ENCODE measurements at regions of chr7 and their contacts with region 1.

Region 1: GRCh38 chr7:27064159-27064558 is 31.6 kb downstream of the HOXA1 start:
- DNase-seq: no peak
- ATAC-seq: no peak

Region 2: DNA sequence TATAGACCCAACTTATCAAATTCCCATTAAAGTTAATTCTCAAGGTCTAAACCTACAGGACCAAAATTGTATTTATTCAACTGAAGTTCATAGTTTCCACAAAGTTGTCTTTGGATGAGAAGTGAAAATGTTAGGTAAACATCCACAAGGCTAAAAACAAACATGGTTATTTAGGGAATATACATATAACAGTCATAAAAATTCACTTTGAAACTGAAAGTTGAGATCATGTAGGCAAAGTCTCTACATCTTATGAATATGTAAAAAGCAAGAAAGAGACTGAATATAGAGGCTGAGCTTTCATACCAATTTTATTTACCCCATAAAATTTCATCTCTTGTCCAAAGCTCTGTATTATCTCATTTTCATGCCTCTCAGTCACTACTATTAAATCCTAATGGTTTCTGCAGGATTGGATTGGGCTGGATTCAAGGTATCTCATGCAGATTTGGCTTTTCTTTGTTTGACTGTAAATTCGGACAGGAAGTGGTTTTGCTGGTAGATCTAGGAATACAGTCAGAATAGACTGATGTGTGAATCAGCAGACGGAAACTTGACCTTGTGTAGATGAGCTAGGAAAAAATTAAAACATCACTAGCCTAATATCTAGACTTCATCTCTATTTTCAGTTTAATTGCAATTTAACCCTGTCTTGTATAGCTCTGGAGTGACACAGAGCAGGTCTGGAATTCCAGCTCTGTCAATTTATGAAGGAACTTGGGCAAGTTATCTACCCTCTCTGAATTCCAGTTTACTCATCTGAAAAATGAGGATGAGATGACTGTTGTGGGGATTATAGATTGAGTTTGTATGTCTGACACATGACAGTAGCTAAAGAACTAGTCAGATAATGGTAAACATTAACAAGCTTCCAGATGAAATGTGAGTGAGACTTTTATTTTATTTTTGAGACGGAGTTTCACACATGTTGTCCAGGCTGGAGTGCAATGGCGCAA is 172.5 kb before region 1 on chr7:
- intact Hi-C with region 1: loop called in 1 of 2 experiments (anchors 10 kb)
- DNase-seq: no peak
- ATAC-seq: no peak

Region 3: DNA sequence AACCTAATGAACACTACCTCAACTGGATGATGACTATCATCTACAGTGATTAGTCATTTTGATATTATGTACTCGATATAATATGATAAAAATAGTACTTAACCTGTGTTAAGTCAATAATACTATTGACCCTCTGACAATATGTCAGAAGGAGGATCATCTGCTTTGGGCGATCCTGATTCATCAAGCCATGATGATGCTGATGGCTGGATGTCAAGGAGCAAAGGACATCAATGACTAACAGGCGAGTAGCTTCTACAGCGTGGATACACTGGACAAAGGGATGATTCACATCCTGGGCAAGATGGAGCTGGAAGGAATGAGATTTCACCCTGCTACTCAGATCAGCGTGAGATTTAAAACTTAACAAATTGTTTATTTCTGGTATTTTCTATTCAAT is 105.3 kb before region 1 on chr7:
- intact Hi-C with region 1: no loop called
- DNase-seq: no peak
- ATAC-seq: no peak

Region 4: DNA sequence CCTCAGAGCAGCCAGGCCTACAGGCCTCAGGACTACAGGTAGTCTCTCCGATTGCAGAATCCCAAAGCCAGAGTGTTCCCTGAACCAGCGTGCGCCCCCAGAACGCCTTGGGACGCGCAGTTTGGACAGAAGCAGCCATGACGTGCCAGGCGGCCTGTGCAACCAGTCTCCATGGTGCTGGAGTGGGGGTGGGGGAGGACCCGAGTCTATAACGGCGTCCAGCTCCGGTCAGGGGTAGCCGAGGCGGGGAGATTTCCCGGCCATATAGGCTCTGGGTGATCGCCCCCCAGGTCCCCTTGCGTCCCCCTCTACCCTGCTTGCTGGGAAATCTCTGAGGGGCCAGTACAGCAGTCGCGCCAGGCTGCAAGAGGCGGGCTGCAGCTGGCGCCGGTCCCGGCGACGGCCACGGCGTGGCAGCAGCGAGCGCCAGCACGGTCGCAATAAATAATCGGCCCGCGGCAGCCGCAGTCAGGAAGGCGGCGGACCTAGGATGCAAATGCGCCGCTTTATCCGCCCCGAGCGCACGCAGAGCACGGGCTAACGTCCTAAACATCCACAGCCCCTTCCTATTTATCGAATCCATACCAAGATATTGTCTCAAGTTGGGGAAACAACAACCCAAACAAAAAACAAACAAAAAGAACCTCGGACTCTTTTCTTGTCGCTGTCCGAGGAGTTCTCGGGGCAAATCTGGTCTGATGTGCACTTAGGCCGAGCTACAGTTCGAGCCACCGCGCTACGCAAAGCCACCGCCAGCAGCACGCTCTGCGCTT is 86.6 kb after region 1 on chr7:
- intact Hi-C with region 1: no loop called
- DNase-seq: peak; percentile 81 to 85
- ATAC-seq: peak; percentile 38

Region 5: GRCh38 chr7:27364344-27365100 is 300.4 kb after region 1 on chr7:
- intact Hi-C with region 1: no loop called
- DNase-seq: peak; percentile 34 to 65
- ATAC-seq: no peak

Measured in left colon (tissue), 2 donors.